Posterior vena cava (tissue), 2 donors: ENCODE measurements at regions of chr15 and their contacts with region 1.

Region 1: GRCh38 chr15:35186346-35186745 is 101.3 kb upstream of the NANOGP8 start:
- DNase-seq: no peak

Region 2: DNA sequence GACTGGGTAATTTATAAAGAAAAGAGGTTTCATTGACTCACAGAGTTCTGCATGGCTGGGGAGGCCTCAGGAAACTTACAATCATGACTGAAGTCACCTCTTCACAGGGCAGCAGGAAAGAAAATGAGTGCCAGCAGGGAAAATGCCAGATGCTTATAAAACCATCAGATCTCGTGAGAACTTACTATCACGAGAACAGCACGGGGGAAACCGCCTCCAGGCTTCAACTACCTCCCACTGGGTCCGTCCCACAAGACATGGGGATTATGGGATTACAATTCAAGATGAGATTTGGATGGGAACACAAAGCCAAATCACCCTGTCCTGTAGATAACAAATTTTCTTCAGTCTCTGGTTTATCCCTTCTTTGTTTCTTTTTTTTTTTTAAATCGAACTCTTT is 1116.3 kb before region 1 on chr15:
- intact Hi-C with region 1: loop called in 1 of 2 experiments (anchors 5 kb)
- DNase-seq: no peak